CD8-positive, alpha-beta T cell (primary cell): ENCODE measurements at regions of chr1 and their contacts with region 1.

Region 1: GRCh38 chr1:110209715-110210603 is at the start of gene KCNC4:
- DNase-seq: peak; percentile 87 to 97 (median 91)
- ATAC-seq: peak; percentile 84
- H3K4me3 ChIP-seq: peak within 1 kb of the TSS; percentile 68 to 73
- H3K4me3 Mint-ChIP-seq: peak within 1 kb of the TSS; percentile 89
- H3K27ac ChIP-seq: peak within 1 kb of the TSS; percentile 69 to 90
- H3K27ac Mint-ChIP-seq: peak within 1 kb of the TSS; percentile 93
- H3K4me1 ChIP-seq: peaks cover 49% of the 10 kb centered on the region
- H3K4me1 Mint-ChIP-seq: peaks cover 54% of the 10 kb centered on the region
- H3K27me3 ChIP-seq: peaks cover 0 to 5% of the 10 kb centered on the region in 2 experiments
- H3K27me3 Mint-ChIP-seq: no peaks in the 10 kb centered on the region
- CTCF ChIP-seq: no peak
- total RNA-seq, gene KCNC4: 11.4 to 13.1 TPM

Region 2: DNA sequence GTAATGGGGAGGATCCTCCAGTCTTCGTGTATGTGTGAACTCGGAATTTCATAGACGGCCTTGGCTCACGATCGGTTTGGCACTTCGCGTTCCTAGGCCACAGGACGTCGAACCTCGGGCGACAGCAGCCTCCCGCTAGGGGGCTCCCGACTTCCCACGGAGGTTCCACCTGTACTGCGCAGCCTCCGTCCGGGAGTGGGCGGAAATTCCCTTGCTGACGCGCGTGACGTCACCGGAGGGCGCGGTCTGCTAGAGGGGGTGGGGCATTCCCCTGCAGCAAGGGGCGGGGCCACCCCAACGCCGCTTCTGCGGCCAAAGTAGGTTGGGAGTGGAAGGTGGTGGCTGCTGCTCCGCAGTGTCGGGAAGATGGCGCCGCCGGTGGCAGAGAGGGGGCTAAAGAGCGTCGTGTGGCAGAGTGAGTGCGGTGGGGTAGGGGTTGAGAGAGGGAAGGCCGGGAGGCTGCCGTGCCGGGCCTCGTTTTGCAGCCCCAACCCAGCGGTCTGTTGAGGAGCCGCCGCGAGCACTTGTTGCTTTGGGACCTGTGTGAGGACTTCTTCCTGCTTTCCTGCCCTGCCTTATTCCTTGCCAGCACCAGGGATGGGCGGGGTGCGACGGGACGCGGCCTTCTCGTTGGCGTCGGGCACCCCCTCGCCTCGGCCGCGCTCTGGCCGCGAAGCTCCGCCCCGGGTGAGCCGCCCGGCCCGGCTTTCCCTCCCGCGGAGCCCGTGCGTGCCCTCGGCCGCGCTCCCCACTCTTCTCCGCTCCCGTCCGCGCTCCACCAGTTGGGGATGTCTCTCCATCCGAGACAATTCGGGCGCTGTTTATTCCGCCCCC is 1463.4 kb before region 1 on chr1 and contains the start of gene STXBP3:
- CTCF ChIA-PET with region 1: no interaction called
- POLR2A ChIA-PET with region 1: no interaction called
- intact Hi-C with region 1: loop called in 1 of 2 experiments (anchors 5 kb)
- DNase-seq: peak; percentile 99 to 100 (median 100)
- ATAC-seq: peak; percentile 92
- H3K4me3 ChIP-seq: peak within 1 kb of the TSS; percentile 72 to 98
- H3K4me3 Mint-ChIP-seq: peak within 1 kb of the TSS; percentile 98
- H3K27ac ChIP-seq: peak within 1 kb of the TSS; percentile 82 to 97
- H3K27ac Mint-ChIP-seq: peak within 1 kb of the TSS; percentile 99
- H3K4me1 ChIP-seq: peaks cover 26% of the 10 kb centered on the region
- H3K4me1 Mint-ChIP-seq: peaks cover 34% of the 10 kb centered on the region
- H3K27me3 ChIP-seq: no peaks in the 10 kb centered on the region
- H3K27me3 Mint-ChIP-seq: no peaks in the 10 kb centered on the region
- CTCF ChIP-seq: peak; percentile 84
- total RNA-seq, gene STXBP3: 49.0 to 50.4 TPM

Region 3: GRCh38 chr1:110176299-110176956 is 33.5 kb before region 1 on chr1:
- CTCF ChIA-PET with region 1: no interaction called
- POLR2A ChIA-PET with region 1: no interaction called
- intact Hi-C with region 1: no loop called
- DNase-seq: no peak
- ATAC-seq: no peak
- H3K4me3 ChIP-seq: no peak overlapping the region
- H3K4me3 Mint-ChIP-seq: no peak overlapping the region
- H3K27ac ChIP-seq: no peak overlapping the region
- H3K27ac Mint-ChIP-seq: no peak overlapping the region
- H3K4me1 ChIP-seq: no peaks in the 10 kb centered on the region
- H3K4me1 Mint-ChIP-seq: no peaks in the 10 kb centered on the region
- H3K27me3 ChIP-seq: no peaks in the 10 kb centered on the region
- H3K27me3 Mint-ChIP-seq: peaks cover 5% of the 10 kb centered on the region
- CTCF ChIP-seq: no peak

Region 4: DNA sequence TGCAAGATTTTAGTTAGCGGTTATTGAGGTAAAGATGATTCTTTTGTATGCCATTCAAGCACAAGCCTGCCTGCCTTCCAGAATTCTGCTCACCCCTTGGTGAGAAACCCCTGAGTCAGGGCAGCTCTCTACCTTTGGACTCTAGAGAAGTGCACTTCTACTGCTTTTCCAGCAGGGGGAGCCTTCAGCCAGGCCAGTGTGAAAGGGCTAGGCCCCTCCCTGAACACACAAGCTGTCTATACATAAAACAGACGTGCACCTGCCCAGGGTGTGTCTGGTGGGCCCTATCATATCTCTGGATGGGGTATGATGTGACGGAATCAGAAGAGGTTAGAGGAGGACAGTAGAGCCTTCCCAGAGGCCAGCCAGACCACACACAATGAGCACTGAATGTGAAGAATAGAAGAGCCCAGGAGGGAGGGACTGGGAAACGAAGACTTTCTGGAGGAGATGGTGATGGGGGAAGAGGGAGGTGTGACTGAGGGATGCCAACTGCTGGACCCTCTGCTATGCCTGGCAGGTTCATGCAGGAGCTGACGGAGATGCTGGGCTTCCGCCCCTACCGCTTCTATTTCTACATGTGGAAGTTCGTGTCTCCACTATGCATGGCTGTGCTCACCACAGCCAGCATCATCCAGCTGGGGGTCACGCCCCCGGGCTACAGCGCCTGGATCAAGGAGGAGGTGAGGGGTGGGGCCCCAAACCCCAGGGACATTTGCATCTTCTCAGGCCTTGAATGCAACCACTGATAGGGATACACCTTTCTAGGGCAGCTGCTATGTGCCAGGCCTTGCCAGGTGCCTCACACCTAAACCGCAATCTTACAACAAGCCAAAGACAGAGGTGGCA is 12.8 kb before region 1 on chr1:
- CTCF ChIA-PET with region 1: interaction called, 46 read pairs
- POLR2A ChIA-PET with region 1: interaction called, 3 read pairs
- intact Hi-C with region 1: no loop called
- DNase-seq: peak in 8 of 9 experiments; percentile 15 to 71 (median 55)
- ATAC-seq: peak; percentile 99
- H3K4me3 ChIP-seq: no peak overlapping the region
- H3K4me3 Mint-ChIP-seq: no peak overlapping the region
- H3K27ac ChIP-seq: no peak overlapping the region
- H3K27ac Mint-ChIP-seq: no peak overlapping the region
- H3K4me1 ChIP-seq: no peaks in the 10 kb centered on the region
- H3K4me1 Mint-ChIP-seq: no peaks in the 10 kb centered on the region
- H3K27me3 ChIP-seq: no peaks in the 10 kb centered on the region
- H3K27me3 Mint-ChIP-seq: no peaks in the 10 kb centered on the region
- CTCF ChIP-seq: peak; percentile 94

Region 5: GRCh38 chr1:110262846-110263631 is 53.1 kb after region 1 on chr1:
- CTCF ChIA-PET with region 1: interaction called, 3 read pairs
- POLR2A ChIA-PET with region 1: no interaction called
- intact Hi-C with region 1: loop called (anchors 2 kb)
- DNase-seq: peak in 2 of 9 experiments; percentile 23 to 41
- ATAC-seq: peak; percentile 26
- H3K4me3 ChIP-seq: no peak overlapping the region
- H3K4me3 Mint-ChIP-seq: no peak overlapping the region
- H3K27ac ChIP-seq: no peak overlapping the region
- H3K27ac Mint-ChIP-seq: no peak overlapping the region
- H3K4me1 ChIP-seq: no peaks in the 10 kb centered on the region
- H3K4me1 Mint-ChIP-seq: no peaks in the 10 kb centered on the region
- H3K27me3 ChIP-seq: no peaks in the 10 kb centered on the region
- H3K27me3 Mint-ChIP-seq: peaks cover 9% of the 10 kb centered on the region
- CTCF ChIP-seq: no peak

Region 6: DNA sequence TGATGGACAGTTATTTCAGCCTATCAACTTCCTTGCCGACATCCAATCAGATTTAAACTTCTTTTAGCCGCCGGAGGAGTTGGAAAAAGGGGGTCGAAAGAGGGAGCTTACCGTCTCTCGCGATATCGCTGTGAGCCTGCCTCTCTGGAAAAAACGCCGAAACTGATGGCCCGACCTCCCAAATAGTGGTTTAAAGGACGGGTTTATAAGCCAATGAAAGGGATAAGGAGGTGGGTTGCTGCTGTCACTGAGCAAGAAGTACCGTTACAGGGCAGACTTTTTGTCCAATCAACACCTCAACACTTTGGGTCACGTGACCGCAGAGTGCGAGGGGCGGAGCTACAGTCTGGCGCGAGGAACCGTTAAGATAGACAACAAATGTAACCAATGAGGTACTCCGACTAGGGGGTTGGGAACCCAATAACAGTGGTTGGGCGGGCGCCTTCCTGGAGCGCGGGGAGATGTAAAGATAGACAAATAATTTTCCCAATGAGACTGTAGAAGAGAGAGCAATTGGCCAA is 129.0 kb after region 1 on chr1 and contains the start of gene RBM15:
- CTCF ChIA-PET with region 1: interaction called, 135 read pairs
- POLR2A ChIA-PET with region 1: interaction called, 73 read pairs
- intact Hi-C with region 1: loop called (anchors 1 kb)
- DNase-seq: peak; percentile 92 to 100 (median 96)
- ATAC-seq: peak; percentile 74
- H3K4me3 ChIP-seq: peak within 1 kb of the TSS; percentile 91 to 97
- H3K4me3 Mint-ChIP-seq: no peak within 1 kb of the TSS
- H3K27ac ChIP-seq: peak within 1 kb of the TSS; percentile 87 to 98
- H3K27ac Mint-ChIP-seq: no peak within 1 kb of the TSS
- H3K4me1 ChIP-seq: peaks cover 49% of the 10 kb centered on the region
- H3K4me1 Mint-ChIP-seq: peaks cover 56% of the 10 kb centered on the region
- H3K27me3 ChIP-seq: no peaks in the 10 kb centered on the region
- H3K27me3 Mint-ChIP-seq: no peaks in the 10 kb centered on the region
- CTCF ChIP-seq: no peak
- total RNA-seq, gene RBM15: 57.1 to 59.3 TPM

Region 7: GRCh38 chr1:110425612-110426152 is 215.7 kb after region 1 on chr1:
- CTCF ChIA-PET with region 1: no interaction called
- POLR2A ChIA-PET with region 1: no interaction called
- intact Hi-C with region 1: no loop called
- DNase-seq: no peak
- ATAC-seq: no peak
- H3K4me3 ChIP-seq: no peak overlapping the region
- H3K4me3 Mint-ChIP-seq: no peak overlapping the region
- H3K27ac ChIP-seq: no peak overlapping the region
- H3K27ac Mint-ChIP-seq: no peak overlapping the region
- H3K4me1 ChIP-seq: no peaks in the 10 kb centered on the region
- H3K4me1 Mint-ChIP-seq: no peaks in the 10 kb centered on the region
- H3K27me3 ChIP-seq: peaks cover 0 to 3% of the 10 kb centered on the region in 2 experiments
- H3K27me3 Mint-ChIP-seq: peaks cover 13% of the 10 kb centered on the region
- CTCF ChIP-seq: no peak

Region 8: DNA sequence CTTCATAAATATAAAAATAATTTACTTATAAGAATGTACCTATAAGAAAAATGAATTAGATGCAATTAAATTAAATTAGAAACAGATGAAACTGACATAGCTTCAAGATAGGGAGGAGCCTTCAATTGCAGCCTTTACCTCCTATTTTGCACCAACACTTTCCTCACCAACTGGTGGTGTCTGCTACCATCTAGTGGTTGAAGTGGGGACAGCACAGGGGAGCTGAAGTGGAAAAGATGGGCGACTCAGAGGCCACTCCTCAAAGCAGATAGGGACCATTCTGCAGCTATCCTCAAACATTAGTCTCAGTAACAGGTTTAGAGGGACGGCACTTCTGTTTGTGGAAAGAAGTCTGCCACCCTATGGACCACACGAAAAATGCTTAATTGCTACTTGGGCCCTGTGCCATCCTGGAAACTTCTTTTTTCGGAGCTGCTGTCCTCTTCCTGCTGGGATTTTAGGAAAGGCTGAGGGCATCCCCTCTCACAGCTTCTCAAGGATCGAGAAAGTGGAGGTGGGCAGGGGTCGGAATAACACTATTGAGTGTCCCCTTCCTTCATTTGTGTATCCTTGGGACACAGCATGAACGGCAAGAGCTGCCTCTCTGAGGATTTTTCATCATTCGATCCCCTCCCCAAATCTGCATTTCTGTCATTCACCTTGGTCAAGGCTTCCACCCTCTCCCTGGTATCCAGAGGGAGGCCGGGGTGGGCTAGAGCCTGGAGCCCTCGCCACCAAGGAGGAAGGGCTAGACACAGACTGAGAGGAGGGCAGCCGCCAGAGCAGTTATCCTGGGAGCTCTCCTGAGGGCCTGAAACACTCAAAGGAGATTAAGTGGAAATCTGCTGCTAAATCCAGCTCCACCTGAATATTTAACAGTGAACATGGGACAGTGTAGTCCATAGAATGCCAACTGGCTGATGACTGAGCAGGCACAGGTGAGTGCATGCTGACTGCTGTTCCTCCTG is 250.6 kb after region 1 on chr1:
- CTCF ChIA-PET with region 1: interaction called, 313 read pairs
- POLR2A ChIA-PET with region 1: interaction called, 3 read pairs
- intact Hi-C with region 1: loop called (anchors 1 kb)
- DNase-seq: peak; percentile 74 to 90 (median 83)
- ATAC-seq: peak; percentile 99
- H3K4me3 ChIP-seq: no peak overlapping the region
- H3K4me3 Mint-ChIP-seq: no peak overlapping the region
- H3K27ac ChIP-seq: no peak overlapping the region
- H3K27ac Mint-ChIP-seq: no peak overlapping the region
- H3K4me1 ChIP-seq: no peaks in the 10 kb centered on the region
- H3K4me1 Mint-ChIP-seq: no peaks in the 10 kb centered on the region
- H3K27me3 ChIP-seq: no peaks in the 10 kb centered on the region
- H3K27me3 Mint-ChIP-seq: no peaks in the 10 kb centered on the region
- CTCF ChIP-seq: peak; percentile 98

Region 9: GRCh38 chr1:110780600-110781484 is 570.9 kb after region 1 on chr1:
- CTCF ChIA-PET with region 1: no interaction called
- POLR2A ChIA-PET with region 1: no interaction called
- intact Hi-C with region 1: loop called in 1 of 2 experiments (anchors 5 kb)
- DNase-seq: peak; percentile 59 to 88 (median 76)
- ATAC-seq: peak; percentile 81
- H3K4me3 ChIP-seq: no peak overlapping the region
- H3K4me3 Mint-ChIP-seq: no peak overlapping the region
- H3K27ac ChIP-seq: no peak overlapping the region
- H3K27ac Mint-ChIP-seq: no peak overlapping the region
- H3K4me1 ChIP-seq: peaks cover 39% of the 10 kb centered on the region
- H3K4me1 Mint-ChIP-seq: peaks cover 46% of the 10 kb centered on the region
- H3K27me3 ChIP-seq: no peaks in the 10 kb centered on the region
- H3K27me3 Mint-ChIP-seq: peaks cover 5% of the 10 kb centered on the region
- CTCF ChIP-seq: peak; percentile 81